ENCODE measurements at regions of chr17 and their contacts with region 1.

Region 1: GRCh38 chr17:12866244-12866643 is 76.9 kb downstream of the ARHGAP44 start:
- DNase-seq: no peak
- H3K4me3 Mint-ChIP-seq: no peak overlapping the region
- H3K27ac Mint-ChIP-seq: no peak overlapping the region
- H3K4me1 Mint-ChIP-seq: no peaks in the 10 kb centered on the region
- H3K27me3 Mint-ChIP-seq: no peaks in the 10 kb centered on the region
- CTCF ChIP-seq: no peak

Region 2: GRCh38 chr17:12902046-12902445 is 35.8 kb after region 1 on chr17:
- CTCF ChIA-PET with region 1: no interaction called
- intact Hi-C with region 1: loop called (anchors 1 kb)
- DNase-seq: no peak
- H3K4me3 Mint-ChIP-seq: no peak overlapping the region
- H3K27ac Mint-ChIP-seq: no peak overlapping the region
- H3K4me1 Mint-ChIP-seq: peaks cover 15% of the 10 kb centered on the region
- H3K27me3 Mint-ChIP-seq: no peaks in the 10 kb centered on the region
- CTCF ChIP-seq: no peak

Measured in Calu3 (cell line).